Heart left ventricle (tissue), 16 donors: ENCODE measurements at regions of chr19 and their contacts with region 1.

Region 1: GRCh38 chr19:43532962-43533545 is at the start of gene ZNF575:
- DNase-seq: peak; percentile 92 to 94 (median 94)
- ATAC-seq: peak; percentile 57 to 81 (median 74)
- H3K4me3 ChIP-seq: peak within 1 kb of the TSS; percentile 35 to 72 (median 60)
- H3K27ac ChIP-seq: peak within 1 kb of the TSS; percentile 58 to 95 (median 88)
- H3K4me1 ChIP-seq: peaks cover 0 to 26% (median 12%) of the 10 kb centered on the region in 12 donors
- H3K27me3 ChIP-seq: no peaks in the 10 kb centered on the region
- CTCF ChIP-seq: peak in 1 of 12 donors; percentile 12
- POLR2A ChIP-seq: no peak
- total RNA-seq, gene ZNF575: 0.58 to 1.9 (median 1.3) TPM in 7 of 9 donors, not detected in the others

Region 2: GRCh38 chr19:43545981-43546380 is 12.9 kb after region 1 on chr19:
- intact Hi-C with region 1: no loop called
- DNase-seq: peak in 1 of 5 donors; percentile 6
- ATAC-seq: peak in 1 of 4 donors; percentile 30
- H3K4me3 ChIP-seq: no peak overlapping the region
- H3K27ac ChIP-seq: no peak overlapping the region
- H3K4me1 ChIP-seq: no peaks in the 10 kb centered on the region
- H3K27me3 ChIP-seq: no peaks in the 10 kb centered on the region
- CTCF ChIP-seq: no peak
- POLR2A ChIP-seq: no peak

Region 3: DNA sequence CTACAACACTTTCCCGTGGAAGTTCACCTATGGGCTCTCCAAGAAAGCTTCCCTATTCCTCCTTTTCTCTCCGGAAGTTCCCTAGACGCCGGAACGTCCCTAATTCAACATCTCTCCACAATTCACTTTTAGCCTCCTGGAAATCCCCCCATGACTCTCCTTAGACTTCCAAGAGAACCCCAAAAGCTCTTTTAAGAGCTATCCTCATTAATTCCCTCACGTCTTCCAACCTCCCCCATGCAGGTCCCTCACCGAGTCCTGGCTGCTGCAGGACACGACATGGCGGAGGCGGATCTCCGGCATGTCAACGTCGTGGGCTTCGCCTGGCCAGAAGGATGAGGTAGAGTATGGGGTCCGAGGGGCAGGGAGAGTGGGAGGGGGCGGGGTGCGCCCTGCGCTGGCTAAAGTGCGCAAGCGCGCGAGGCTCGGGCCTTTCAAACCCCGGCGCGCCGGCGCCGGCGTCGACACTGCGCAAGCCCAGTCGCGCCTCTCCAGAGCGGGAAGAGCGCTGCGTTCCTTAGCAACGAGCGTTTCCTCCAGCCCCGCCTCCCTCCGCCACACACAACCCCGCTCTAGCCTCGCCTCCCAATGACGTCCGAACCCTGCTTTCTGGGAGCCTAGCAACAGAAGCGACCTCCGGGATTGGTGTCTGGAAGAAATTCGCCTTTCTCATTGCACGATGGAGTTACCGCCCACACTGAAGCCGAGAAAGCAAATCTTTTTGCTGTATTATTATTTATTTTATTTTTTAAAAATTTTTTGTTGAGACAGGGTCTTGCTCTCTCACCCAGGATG is 42.3 kb after region 1 on chr19 and contains the starts of genes PINLYP and XRCC1:
- intact Hi-C with region 1: loop called in 1 of 10 experiments (anchors 1 kb)
- DNase-seq: peak; percentile 98 to 99 (median 99)
- ATAC-seq: peak; percentile 99 to 100 (median 100)
- H3K4me3 ChIP-seq: peak within 1 kb of the TSS; percentile 57 to 96 (median 87)
- H3K27ac ChIP-seq: peak within 1 kb of the TSS in 11 of 12 donors; percentile 49 to 93 (median 83)
- H3K4me1 ChIP-seq: peaks cover 6 to 24% (median 13%) of the 10 kb centered on the region in 12 donors
- H3K27me3 ChIP-seq: no peaks in the 10 kb centered on the region
- CTCF ChIP-seq: no peak
- POLR2A ChIP-seq: peak in 1 of 2 donors; percentile 57
- total RNA-seq, gene PINLYP: 0.76 to 4.3 (median 1.1) TPM in 8 of 9 donors, not detected in the other
- total RNA-seq, gene XRCC1: 11.2 to 21.3 (median 16.6) TPM